ENCODE measurements at regions of chr10 and their contacts with region 1.

Region 1: DNA sequence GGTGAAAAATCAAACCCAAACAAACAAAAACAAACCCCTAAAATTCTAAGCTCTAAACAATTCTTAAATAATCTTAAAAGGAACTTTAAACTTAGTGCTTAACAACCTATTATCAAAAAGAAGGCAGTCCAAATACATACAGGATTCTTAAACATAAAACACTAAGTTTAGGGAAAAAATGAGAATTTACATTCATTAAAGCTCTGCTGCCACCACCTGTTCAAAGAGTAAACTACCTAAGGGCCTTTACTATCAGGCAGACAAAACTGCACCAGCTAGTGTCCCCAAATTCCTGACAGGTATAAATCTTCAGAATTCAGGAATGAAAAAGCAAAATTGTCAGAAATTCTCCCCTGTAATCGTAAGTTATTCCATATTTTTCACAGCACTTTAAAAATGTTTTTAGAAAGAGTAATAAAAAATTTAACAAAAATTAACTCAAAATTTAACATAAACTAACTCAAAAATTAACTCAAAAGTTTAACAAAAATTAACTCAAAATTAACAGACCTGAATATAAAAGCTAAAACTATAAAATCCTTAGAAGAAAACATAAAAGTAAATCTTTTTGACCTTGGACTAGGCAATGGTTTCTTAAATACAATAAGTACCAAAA is 55.1 kb downstream of the PDZD8 start:
- DNase-seq: no peak
- ATAC-seq: peak; percentile 80
- H3K4me3 ChIP-seq: no peak overlapping the region
- H3K27ac ChIP-seq: no peak overlapping the region
- H3K4me1 ChIP-seq: no peaks in the 10 kb centered on the region
- H3K27me3 ChIP-seq: no peaks in the 10 kb centered on the region
- CTCF ChIP-seq: peak; percentile 48 to 65 (median 56)
- EP300 ChIP-seq: no peak
- POLR2A ChIP-seq: no peak
- RAD21 ChIP-seq: peak; percentile 62

Region 2: GRCh38 chr10:116888380-116889055 is 431.6 kb before region 1 on chr10:
- CTCF ChIA-PET with region 1: no interaction called
- POLR2A ChIA-PET with region 1: interaction called, 12 read pairs
- RAD21 ChIA-PET with region 1: no interaction called
- SMC1A ChIA-PET with region 1: no interaction called
- in situ Hi-C with region 1: no loop called
- intact Hi-C with region 1: no loop called
- DNase-seq: no peak
- ATAC-seq: no peak
- H3K4me3 ChIP-seq: no peak overlapping the region
- H3K27ac ChIP-seq: no peak overlapping the region
- H3K4me1 ChIP-seq: no peaks in the 10 kb centered on the region
- H3K27me3 ChIP-seq: peaks cover 0 to 3% of the 10 kb centered on the region in 2 experiments; a peak in 2 of 4 replicates
- CTCF ChIP-seq: no peak
- EP300 ChIP-seq: no peak
- POLR2A ChIP-seq: no peak
- RAD21 ChIP-seq: no peak

Region 3: GRCh38 chr10:117014835-117015234 is 305.3 kb before region 1 on chr10:
- CTCF ChIA-PET with region 1: no interaction called
- POLR2A ChIA-PET with region 1: no interaction called
- RAD21 ChIA-PET with region 1: no interaction called
- SMC1A ChIA-PET with region 1: no interaction called
- in situ Hi-C with region 1: no loop called
- intact Hi-C with region 1: no loop called
- DNase-seq: no peak
- ATAC-seq: no peak
- H3K4me3 ChIP-seq: no peak overlapping the region
- H3K27ac ChIP-seq: no peak overlapping the region
- H3K4me1 ChIP-seq: no peaks in the 10 kb centered on the region
- H3K27me3 ChIP-seq: no peaks in the 10 kb centered on the region
- CTCF ChIP-seq: no peak
- EP300 ChIP-seq: no peak
- POLR2A ChIP-seq: no peak
- RAD21 ChIP-seq: no peak

Region 4: DNA sequence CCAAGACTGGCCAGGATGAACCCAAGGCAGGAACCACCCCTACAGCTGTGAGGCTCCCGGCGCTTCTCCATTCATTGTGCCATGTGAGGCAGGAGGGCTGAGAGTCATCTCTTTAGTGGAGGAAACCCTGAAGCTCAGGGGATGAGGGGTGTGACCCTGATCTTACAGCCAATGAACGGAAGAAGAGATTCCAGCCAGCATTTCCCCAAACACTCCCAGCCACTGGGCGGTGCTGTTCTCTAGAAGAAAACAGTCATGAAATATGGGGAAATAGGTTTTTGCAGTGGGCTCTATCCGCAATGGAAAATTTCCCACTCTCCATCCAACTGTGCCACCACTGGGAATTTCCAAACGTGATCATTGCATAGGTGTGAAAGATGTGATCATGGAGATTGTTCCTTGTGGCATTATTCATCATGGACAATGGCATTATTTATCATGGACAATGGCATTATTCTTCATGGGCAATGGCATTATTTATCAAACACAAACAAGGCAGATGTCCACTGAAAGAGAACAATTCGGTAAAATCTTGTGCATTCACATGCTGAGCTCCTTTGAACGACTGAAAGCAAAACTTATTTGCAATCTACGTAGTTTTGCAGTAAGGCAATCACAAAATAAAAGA is 93.2 kb before region 1 on chr10:
- CTCF ChIA-PET with region 1: interaction called, 43 read pairs
- POLR2A ChIA-PET with region 1: no interaction called
- RAD21 ChIA-PET with region 1: interaction called, 7 read pairs
- SMC1A ChIA-PET with region 1: interaction called, 9 read pairs
- in situ Hi-C with region 1: loop called (anchors 5 kb)
- intact Hi-C with region 1: no loop called
- DNase-seq: no peak
- ATAC-seq: peak; percentile 61
- H3K4me3 ChIP-seq: no peak overlapping the region
- H3K27ac ChIP-seq: no peak overlapping the region
- H3K4me1 ChIP-seq: no peaks in the 10 kb centered on the region
- H3K27me3 ChIP-seq: no peaks in the 10 kb centered on the region; a peak in 1 of 4 replicates
- CTCF ChIP-seq: peak; percentile 47 to 53 (median 47); a peak in 5 of 6 replicates
- EP300 ChIP-seq: no peak
- POLR2A ChIP-seq: no peak
- RAD21 ChIP-seq: peak; percentile 36; the same call in 1 of the 2 replicates

Region 5: GRCh38 chr10:117300671-117301070 is 19.5 kb before region 1 on chr10:
- CTCF ChIA-PET with region 1: interaction called, 10 read pairs
- POLR2A ChIA-PET with region 1: no interaction called
- RAD21 ChIA-PET with region 1: no interaction called
- SMC1A ChIA-PET with region 1: interaction called, 7 read pairs
- in situ Hi-C with region 1: no loop called
- intact Hi-C with region 1: no loop called
- DNase-seq: no peak
- ATAC-seq: no peak
- H3K4me3 ChIP-seq: no peak overlapping the region
- H3K27ac ChIP-seq: no peak overlapping the region
- H3K4me1 ChIP-seq: no peaks in the 10 kb centered on the region
- H3K27me3 ChIP-seq: no peaks in the 10 kb centered on the region
- CTCF ChIP-seq: no peak
- EP300 ChIP-seq: no peak
- POLR2A ChIP-seq: no peak
- RAD21 ChIP-seq: no peak

Region 6: DNA sequence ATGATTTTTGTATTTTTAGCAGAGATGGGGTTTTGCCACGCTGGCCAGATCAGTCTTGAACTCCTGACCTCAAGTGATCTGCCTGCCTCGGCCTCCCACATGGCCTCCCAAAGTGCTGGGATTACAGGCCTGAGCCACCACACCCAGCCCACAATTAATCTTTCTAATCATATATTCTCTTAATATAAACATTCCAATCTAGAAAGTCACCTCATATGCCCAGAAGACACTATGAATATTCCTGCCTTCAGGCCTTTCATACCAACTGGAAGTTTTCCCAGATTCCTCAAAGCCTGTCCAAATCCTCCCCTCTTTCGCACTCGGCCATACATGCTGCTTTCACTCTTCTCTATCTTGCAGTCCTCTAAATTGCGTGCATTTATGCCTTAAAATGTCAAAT is 22.5 kb after region 1 on chr10:
- CTCF ChIA-PET with region 1: interaction called, 34 read pairs
- POLR2A ChIA-PET with region 1: interaction called, 3 read pairs
- RAD21 ChIA-PET with region 1: interaction called, 4 read pairs
- SMC1A ChIA-PET with region 1: interaction called, 4 read pairs
- in situ Hi-C with region 1: no loop called
- intact Hi-C with region 1: no loop called
- DNase-seq: no peak
- ATAC-seq: peak; percentile 43
- H3K4me3 ChIP-seq: peak overlapping the region; percentile 51; the same call in 1 of the 2 replicates
- H3K27ac ChIP-seq: peak overlapping the region; percentile 37
- H3K4me1 ChIP-seq: peaks cover 12% of the 10 kb centered on the region
- H3K27me3 ChIP-seq: no peaks in the 10 kb centered on the region
- CTCF ChIP-seq: no peak
- EP300 ChIP-seq: no peak
- POLR2A ChIP-seq: no peak
- RAD21 ChIP-seq: no peak

Region 7: GRCh38 chr10:117370205-117370604 is 50.0 kb after region 1 on chr10:
- CTCF ChIA-PET with region 1: interaction called, 17 read pairs
- POLR2A ChIA-PET with region 1: no interaction called
- RAD21 ChIA-PET with region 1: interaction called, 5 read pairs
- SMC1A ChIA-PET with region 1: interaction called, 16 read pairs
- in situ Hi-C with region 1: no loop called
- intact Hi-C with region 1: loop called (anchors 5 kb)
- DNase-seq: no peak
- ATAC-seq: no peak
- H3K4me3 ChIP-seq: no peak overlapping the region
- H3K27ac ChIP-seq: no peak overlapping the region
- H3K4me1 ChIP-seq: peaks cover 11% of the 10 kb centered on the region
- H3K27me3 ChIP-seq: no peaks in the 10 kb centered on the region
- CTCF ChIP-seq: no peak
- EP300 ChIP-seq: no peak
- POLR2A ChIP-seq: no peak
- RAD21 ChIP-seq: no peak

Region 8: DNA sequence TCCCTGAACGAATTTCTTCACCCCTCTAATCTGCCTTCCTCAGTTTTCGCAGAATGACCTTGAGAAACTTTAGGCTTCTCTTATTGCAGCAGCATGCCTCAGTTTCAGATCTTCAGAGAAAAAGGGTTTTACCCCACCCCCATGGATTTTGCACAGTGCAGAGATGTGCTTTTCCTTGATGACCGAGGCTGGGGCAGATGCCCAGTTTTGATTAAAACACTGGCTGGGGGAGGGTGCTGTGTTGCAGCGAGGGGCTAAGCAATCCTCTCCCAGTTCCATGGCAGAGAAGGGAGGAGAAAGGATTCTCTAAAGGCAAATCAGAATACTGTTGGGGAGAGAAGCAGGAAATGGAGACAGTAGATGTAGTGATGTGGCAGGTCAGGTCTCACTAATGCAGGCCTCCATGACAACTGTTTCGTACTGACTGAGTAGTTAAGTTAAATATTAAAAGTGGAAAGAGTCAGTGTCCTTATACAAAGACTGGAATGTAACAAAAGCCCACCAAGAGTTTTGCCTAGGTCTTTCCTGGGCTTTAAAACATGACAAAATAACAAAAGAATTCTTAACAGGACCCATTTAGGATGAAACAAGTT is 105.9 kb after region 1 on chr10:
- CTCF ChIA-PET with region 1: interaction called, 7 read pairs
- POLR2A ChIA-PET with region 1: no interaction called
- RAD21 ChIA-PET with region 1: interaction called, 3 read pairs
- SMC1A ChIA-PET with region 1: interaction called, 17 read pairs
- in situ Hi-C with region 1: no loop called
- intact Hi-C with region 1: no loop called
- DNase-seq: no peak
- ATAC-seq: peak; percentile 90
- H3K4me3 ChIP-seq: no peak overlapping the region
- H3K27ac ChIP-seq: no peak overlapping the region
- H3K4me1 ChIP-seq: no peaks in the 10 kb centered on the region
- H3K27me3 ChIP-seq: no peaks in the 10 kb centered on the region
- CTCF ChIP-seq: no peak
- EP300 ChIP-seq: no peak
- POLR2A ChIP-seq: no peak
- RAD21 ChIP-seq: no peak